Caco-2 (cell line): ENCODE measurements at regions of chr17 and their contacts with region 1.

Region 1: DNA sequence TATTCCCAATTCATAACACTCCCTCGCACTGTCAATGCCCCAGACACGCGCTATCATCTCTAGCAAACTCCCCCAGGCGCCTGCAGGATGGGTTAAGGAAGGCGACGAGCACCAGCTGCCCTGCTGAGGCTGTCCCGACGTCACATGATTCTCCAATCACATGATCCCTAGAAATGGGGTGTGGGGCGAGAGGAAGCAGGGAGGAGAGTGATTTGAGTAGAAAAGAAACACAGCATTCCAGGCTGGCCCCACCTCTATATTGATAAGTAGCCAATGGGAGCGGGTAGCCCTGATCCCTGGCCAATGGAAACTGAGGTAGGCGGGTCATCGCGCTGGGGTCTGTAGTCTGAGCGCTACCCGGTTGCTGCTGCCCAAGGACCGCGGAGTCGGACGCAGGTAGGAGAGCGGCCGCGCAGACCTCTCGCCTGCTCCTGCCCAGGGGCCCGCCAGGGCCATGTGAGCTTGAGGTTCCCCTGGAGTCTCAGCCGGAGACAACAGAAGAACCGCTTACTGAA is at the start of gene GRN:
- DNase-seq: peak; percentile 97 to 98
- H3K4me3 ChIP-seq: peak within 1 kb of the TSS; percentile 69
- H3K4me3 Mint-ChIP-seq: peak within 1 kb of the TSS; percentile 90
- H3K27ac Mint-ChIP-seq: peak within 1 kb of the TSS; percentile 90
- H3K4me1 ChIP-seq: 0 out of 2 replicates have a peak, but pooled peaks cover 6% of the 10 kb centered on the region
- H3K4me1 Mint-ChIP-seq: peaks cover 22% of the 10 kb centered on the region
- H3K27me3 ChIP-seq: no peaks in the 10 kb centered on the region
- H3K27me3 Mint-ChIP-seq: peaks cover 3% of the 10 kb centered on the region
- CTCF ChIP-seq: no peak
- total RNA-seq, gene GRN: 167 and 176 TPM in 2 replicates

Region 2: GRCh38 chr17:44324571-44325275 is 20.3 kb before region 1 on chr17 and contains the start of gene SLC25A39:
- CTCF ChIA-PET with region 1: interaction called, 10 read pairs
- POLR2A ChIA-PET with region 1: interaction called, 4 read pairs
- intact Hi-C with region 1: no loop called
- DNase-seq: peak; percentile 94 to 99
- H3K4me3 ChIP-seq: peak within 1 kb of the TSS; percentile 84
- H3K4me3 Mint-ChIP-seq: peak within 1 kb of the TSS; percentile 93
- H3K27ac Mint-ChIP-seq: peak within 1 kb of the TSS; percentile 85
- H3K4me1 ChIP-seq: peaks cover 8% of the 10 kb centered on the region
- H3K4me1 Mint-ChIP-seq: no peaks in the 10 kb centered on the region
- H3K27me3 ChIP-seq: no peaks in the 10 kb centered on the region
- H3K27me3 Mint-ChIP-seq: no peaks in the 10 kb centered on the region
- CTCF ChIP-seq: no peak
- total RNA-seq, gene SLC25A39: 155 and 172 TPM in 2 replicates

Region 3: DNA sequence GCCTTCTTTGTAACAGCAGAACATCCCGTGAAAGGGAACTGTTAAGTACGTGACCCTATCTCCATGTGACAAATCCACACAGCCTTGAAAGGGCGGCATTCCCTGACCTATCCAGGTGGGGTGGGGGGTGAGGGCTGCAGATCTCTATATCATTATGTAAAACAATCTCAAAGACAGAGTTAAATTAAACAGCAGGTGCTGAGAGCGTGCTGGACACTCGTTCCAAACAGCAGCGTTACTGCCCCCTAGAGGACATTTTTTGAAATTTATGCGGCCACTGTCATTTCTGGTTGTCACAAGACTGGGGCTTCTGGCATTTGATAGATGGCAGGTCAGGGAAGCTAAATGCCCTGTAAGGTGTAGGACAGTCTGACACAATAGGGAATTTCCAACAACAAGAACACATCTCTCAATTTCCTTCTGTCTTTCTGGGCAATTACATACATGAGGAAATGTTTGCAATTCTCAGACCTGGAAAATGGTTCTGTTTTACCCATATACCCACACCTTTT is 13.7 kb before region 1 on chr17:
- CTCF ChIA-PET with region 1: interaction called, 10 read pairs
- POLR2A ChIA-PET with region 1: interaction called, 5 read pairs
- intact Hi-C with region 1: loop called (anchors 1 kb)
- DNase-seq: peak; percentile 81 to 89
- H3K4me3 ChIP-seq: no peak overlapping the region
- H3K4me3 Mint-ChIP-seq: no peak overlapping the region
- H3K27ac Mint-ChIP-seq: no peak overlapping the region
- H3K4me1 ChIP-seq: peaks cover 8% of the 10 kb centered on the region
- H3K4me1 Mint-ChIP-seq: no peaks in the 10 kb centered on the region
- H3K27me3 ChIP-seq: no peaks in the 10 kb centered on the region; the same call in 1 of the 2 replicates
- H3K27me3 Mint-ChIP-seq: no peaks in the 10 kb centered on the region
- CTCF ChIP-seq: peak; percentile 65 to 87

Region 4: DNA sequence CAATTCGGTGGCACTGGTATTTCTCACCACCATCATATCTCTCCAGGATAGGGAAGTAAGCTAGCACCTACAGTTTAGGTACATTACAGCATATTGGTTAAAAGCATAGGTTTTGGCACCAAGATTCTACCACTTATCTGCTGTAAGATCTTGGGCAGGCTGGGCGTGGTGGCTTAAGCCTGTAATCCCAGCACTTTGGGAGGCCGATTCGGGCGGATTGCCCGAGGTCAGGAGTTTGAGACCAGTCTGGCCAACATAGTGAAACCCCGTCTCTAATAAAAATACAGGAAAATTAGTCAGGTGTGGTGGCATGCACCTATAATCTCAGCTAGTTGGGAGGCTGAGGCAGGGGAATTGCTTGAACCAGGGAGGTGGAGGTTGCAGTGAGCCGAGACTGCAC is 106.8 kb after region 1 on chr17:
- CTCF ChIA-PET with region 1: no interaction called
- POLR2A ChIA-PET with region 1: no interaction called
- intact Hi-C with region 1: no loop called
- DNase-seq: no peak
- H3K4me3 ChIP-seq: no peak overlapping the region
- H3K4me3 Mint-ChIP-seq: no peak overlapping the region
- H3K27ac Mint-ChIP-seq: no peak overlapping the region
- H3K4me1 ChIP-seq: no peaks in the 10 kb centered on the region
- H3K4me1 Mint-ChIP-seq: no peaks in the 10 kb centered on the region
- H3K27me3 ChIP-seq: no peaks in the 10 kb centered on the region
- H3K27me3 Mint-ChIP-seq: no peaks in the 10 kb centered on the region
- CTCF ChIP-seq: no peak